ENCODE measurements at regions of chr12 and their contacts with region 1.

Region 1: DNA sequence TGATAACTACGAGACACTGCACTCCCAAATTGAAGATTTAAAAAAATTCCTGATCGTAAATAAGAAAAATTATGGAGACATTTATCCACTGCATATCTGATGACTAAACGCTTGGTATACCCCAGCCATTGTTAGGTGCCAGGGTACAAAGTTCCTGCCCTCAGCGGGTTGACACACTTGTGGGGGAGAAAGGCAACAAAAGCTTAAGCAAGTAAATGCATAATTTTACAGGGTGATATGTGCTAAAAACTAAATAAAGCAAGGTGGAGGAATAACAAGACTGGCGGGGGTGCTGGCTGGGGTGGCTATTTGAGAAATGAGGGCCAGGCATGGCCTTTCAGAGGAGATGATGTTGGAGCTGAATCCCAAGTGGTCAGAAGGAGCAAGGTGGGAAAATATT is 25.0 kb downstream of the BICD1 start:
- DNase-seq: no peak
- ATAC-seq: no peak
- H3K4me3 ChIP-seq: no peak overlapping the region
- H3K27ac ChIP-seq: no peak overlapping the region
- H3K4me1 ChIP-seq: peaks cover 0 to 17% (median 12%) of the 10 kb centered on the region in 9 donors
- H3K27me3 ChIP-seq: no peaks in the 10 kb centered on the region
- CTCF ChIP-seq: no peak

Region 2: GRCh38 chr12:32151086-32151485 is 19.4 kb after region 1 on chr12:
- intact Hi-C with region 1: loop called in 1 of 10 experiments (anchors 2 kb)
- DNase-seq: no peak
- ATAC-seq: no peak
- H3K4me3 ChIP-seq: no peak overlapping the region
- H3K27ac ChIP-seq: no peak overlapping the region
- H3K4me1 ChIP-seq: peaks cover 0 to 5% (median 0%) of the 10 kb centered on the region in 9 donors
- H3K27me3 ChIP-seq: no peaks in the 10 kb centered on the region
- CTCF ChIP-seq: no peak

Measured in heart right ventricle (tissue), 16 donors.